ENCODE measurements at regions of chr5 and their contacts with region 1.

Region 1: DNA sequence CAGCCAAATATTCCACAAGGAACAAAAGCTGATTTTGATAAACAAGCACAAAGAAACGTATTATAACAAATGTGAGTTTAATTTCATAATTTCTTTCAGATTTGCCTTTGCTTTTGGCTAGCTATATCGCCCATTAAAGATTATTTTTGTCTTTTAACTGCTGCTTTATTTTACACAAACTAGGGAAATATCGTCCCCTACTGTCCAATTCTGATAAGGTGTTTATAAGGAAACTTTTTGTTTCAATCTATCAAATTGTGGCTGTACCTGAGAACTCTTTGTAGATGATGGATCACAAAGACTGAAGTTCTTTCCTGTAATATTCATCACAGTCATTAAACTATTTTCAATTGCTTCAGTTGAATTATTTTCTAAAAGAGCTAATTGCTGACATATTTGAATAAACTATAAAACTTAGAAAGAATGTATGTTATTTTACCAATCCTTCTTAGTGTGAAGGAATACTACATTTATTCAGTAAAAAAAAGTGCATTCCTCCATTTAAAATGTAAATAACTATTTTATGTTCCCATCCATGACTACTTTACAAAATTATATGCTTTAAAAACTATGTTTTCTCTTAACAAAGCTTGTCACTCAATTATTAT is 431.3 kb upstream of the ITGA1 start:
- DNase-seq: no peak
- H3K4me3 Mint-ChIP-seq: no peak overlapping the region
- H3K27ac Mint-ChIP-seq: no peak overlapping the region
- H3K4me1 Mint-ChIP-seq: no peaks in the 10 kb centered on the region
- H3K27me3 Mint-ChIP-seq: no peaks in the 10 kb centered on the region
- CTCF ChIP-seq: peak; percentile 59

Region 2: GRCh38 chr5:52007230-52007858 is 349.1 kb before region 1 on chr5:
- CTCF ChIA-PET with region 1: no interaction called
- intact Hi-C with region 1: loop called (anchors 5 kb)
- DNase-seq: peak; percentile 54
- H3K4me3 Mint-ChIP-seq: peak overlapping the region; percentile 43
- H3K27ac Mint-ChIP-seq: no peak overlapping the region
- H3K4me1 Mint-ChIP-seq: peaks cover 15% of the 10 kb centered on the region
- H3K27me3 Mint-ChIP-seq: no peaks in the 10 kb centered on the region
- CTCF ChIP-seq: peak; percentile 56

Region 3: DNA sequence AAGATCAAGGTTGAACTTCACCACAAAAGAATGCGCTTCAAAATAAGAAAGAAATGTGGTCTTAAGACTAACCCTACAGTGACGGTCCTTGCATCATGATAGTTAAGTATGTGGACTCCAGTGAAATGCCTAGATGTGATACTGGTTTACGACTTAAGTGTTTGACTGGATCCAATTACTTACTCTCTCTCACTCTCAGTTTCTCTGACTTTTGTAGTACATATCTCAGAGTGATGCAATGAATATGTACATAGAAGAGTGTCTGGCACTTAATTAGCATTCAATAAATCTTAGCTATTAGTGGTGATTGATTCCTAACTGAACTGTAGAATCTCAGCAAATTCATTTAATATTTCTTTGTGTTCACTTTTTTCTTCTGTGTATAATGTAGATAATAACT is 19.6 kb after region 1 on chr5:
- CTCF ChIA-PET with region 1: no interaction called
- intact Hi-C with region 1: no loop called
- DNase-seq: no peak
- H3K4me3 Mint-ChIP-seq: no peak overlapping the region
- H3K27ac Mint-ChIP-seq: no peak overlapping the region
- H3K4me1 Mint-ChIP-seq: no peaks in the 10 kb centered on the region
- H3K27me3 Mint-ChIP-seq: no peaks in the 10 kb centered on the region
- CTCF ChIP-seq: no peak

Region 4: DNA sequence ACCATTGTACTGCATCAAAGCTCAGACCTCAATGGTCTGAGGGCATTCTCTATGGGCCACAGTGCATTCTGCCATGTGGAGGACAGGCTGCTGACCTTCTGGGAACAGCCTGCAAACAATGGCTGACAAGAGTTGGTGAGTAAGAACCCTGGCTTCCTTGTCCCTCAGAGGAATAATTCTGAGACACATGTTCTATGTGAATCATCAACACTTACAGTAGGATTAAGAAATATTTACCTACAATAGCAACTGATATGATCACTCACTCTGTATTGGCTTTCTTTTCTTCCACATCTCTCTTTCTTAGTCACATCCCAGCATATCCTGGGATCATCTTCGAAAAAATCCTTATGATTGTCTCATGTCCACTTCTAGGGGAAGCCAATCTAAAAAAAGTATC is 124.8 kb after region 1 on chr5:
- CTCF ChIA-PET with region 1: no interaction called
- intact Hi-C with region 1: no loop called
- DNase-seq: no peak
- H3K4me3 Mint-ChIP-seq: no peak overlapping the region
- H3K27ac Mint-ChIP-seq: no peak overlapping the region
- H3K4me1 Mint-ChIP-seq: no peaks in the 10 kb centered on the region
- H3K27me3 Mint-ChIP-seq: no peaks in the 10 kb centered on the region
- CTCF ChIP-seq: no peak

Region 5: DNA sequence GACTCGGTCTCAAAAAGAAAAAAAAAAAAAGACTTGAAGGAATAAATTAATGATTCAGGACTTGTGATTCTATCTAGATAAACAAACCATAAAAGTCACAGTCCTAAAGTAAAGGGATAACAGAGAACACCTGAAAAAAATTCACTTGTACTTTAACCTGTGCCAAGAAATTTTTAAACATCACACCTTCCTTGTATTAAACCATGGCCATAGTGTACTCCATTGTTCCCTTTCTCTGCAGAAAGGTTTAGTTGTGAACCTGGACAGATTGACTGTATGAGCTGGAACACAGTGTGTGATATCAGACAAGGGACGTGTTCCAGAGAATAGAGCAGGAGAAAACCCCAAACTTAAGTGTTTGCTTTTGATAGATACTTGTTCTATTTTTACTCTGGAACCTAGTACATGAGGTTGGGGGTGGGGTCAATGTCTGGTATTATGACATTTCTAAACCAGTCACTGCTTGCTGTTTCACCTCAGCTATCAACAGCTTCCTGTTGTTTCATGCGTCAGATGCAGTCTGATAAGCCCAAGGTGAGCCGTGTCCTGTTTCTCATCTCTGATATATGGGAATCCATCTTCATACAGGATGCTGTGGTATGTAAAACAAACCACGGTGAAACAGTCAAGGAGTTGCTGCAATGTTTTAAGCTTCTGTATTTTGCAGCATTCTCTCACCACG is 368.8 kb after region 1 on chr5:
- CTCF ChIA-PET with region 1: no interaction called
- intact Hi-C with region 1: no loop called
- DNase-seq: peak; percentile 54
- H3K4me3 Mint-ChIP-seq: no peak overlapping the region
- H3K27ac Mint-ChIP-seq: peak overlapping the region; percentile 15
- H3K4me1 Mint-ChIP-seq: peaks cover 30% of the 10 kb centered on the region
- H3K27me3 Mint-ChIP-seq: no peaks in the 10 kb centered on the region
- CTCF ChIP-seq: no peak

Measured in Calu3 (cell line).